ENCODE measurements at regions of chr1 and their contacts with region 1.

Region 1: DNA sequence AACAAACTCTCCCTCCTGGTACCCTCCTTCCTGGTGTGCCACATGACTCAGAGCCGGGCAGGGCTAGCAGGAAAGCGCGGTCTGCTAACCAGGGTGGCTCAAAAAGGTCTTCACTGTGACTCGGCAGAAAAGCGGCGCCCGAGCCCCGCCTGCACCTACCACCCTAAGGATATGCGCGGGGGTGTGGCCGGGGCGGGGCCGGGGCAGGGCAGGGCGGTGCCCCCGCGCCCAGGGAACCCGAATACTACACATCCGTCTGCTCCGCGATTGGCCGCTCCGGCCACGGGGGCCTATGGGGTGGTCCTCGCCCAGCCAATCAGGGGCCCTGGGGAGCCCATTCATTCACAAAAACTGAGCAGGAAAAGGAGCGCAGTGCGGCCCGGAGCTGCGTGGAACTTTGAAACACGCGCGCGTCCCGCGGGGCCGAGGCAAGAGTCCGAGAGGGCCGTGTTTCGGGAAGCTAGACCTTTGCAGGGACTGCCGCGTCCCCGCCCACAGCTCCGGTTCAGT is 1.7 kb downstream of the LRP8 start:
- DNase-seq: peak; percentile 99
- ATAC-seq: peak; percentile 93
- H3K4me3 ChIP-seq: peak overlapping the region; percentile 86
- H3K27ac ChIP-seq: peak overlapping the region; percentile 92
- H3K4me1 ChIP-seq: peaks cover 14 to 42% of the 10 kb centered on the region in 2 experiments
- H3K27me3 ChIP-seq: peaks cover 2 to 3% of the 10 kb centered on the region in 2 experiments; a peak in 1 of 5 replicates
- CTCF ChIP-seq: no peak
- EP300 ChIP-seq: peak; percentile 65; the same call in 1 of the 2 replicates
- POLR2A ChIP-seq: peak; percentile 98
- RAD21 ChIP-seq: no peak

Region 2: GRCh38 chr1:53203466-53203865 is 122.7 kb before region 1 on chr1:
- CTCF ChIA-PET with region 1: no interaction called
- POLR2A ChIA-PET with region 1: no interaction called
- in situ Hi-C with region 1: no loop called
- intact Hi-C with region 1: no loop called
- DNase-seq: no peak
- ATAC-seq: no peak
- H3K4me3 ChIP-seq: no peak overlapping the region
- H3K27ac ChIP-seq: no peak overlapping the region
- H3K4me1 ChIP-seq: no peaks in the 10 kb centered on the region; a peak in 2 of 5 replicates
- H3K27me3 ChIP-seq: no peaks in the 10 kb centered on the region
- CTCF ChIP-seq: no peak
- EP300 ChIP-seq: no peak
- POLR2A ChIP-seq: no peak
- RAD21 ChIP-seq: no peak

Region 3: DNA sequence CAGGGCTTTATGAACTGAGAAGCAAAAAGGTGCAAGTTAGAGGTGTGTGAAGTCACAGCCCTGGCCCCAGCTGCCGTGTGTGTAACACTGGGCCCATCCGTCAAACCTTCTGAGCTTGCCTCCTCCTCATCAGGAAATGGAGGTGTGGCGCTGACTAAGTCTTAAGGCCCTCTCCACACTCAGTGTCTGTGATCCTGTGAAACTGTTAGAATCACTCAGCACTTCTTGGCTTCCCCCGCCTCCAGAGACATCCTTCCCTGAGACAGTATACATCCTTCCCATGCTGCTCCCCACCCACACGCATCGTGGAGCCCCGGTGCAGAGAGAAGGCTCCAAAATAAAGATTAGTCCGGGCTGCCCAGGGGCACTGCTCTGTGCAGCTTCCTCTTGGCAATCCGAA is 31.6 kb before region 1 on chr1:
- CTCF ChIA-PET with region 1: no interaction called
- POLR2A ChIA-PET with region 1: interaction called, 5 read pairs
- in situ Hi-C with region 1: no loop called
- intact Hi-C with region 1: loop called (anchors 5 kb)
- DNase-seq: peak in 1 of 4 experiments; percentile 42
- ATAC-seq: peak; percentile 13
- H3K4me3 ChIP-seq: no peak overlapping the region
- H3K27ac ChIP-seq: no peak overlapping the region
- H3K4me1 ChIP-seq: peaks cover 7 to 35% of the 10 kb centered on the region in 2 experiments; a peak in 3 of 5 replicates
- H3K27me3 ChIP-seq: no peaks in the 10 kb centered on the region
- CTCF ChIP-seq: no peak
- EP300 ChIP-seq: no peak
- POLR2A ChIP-seq: no peak
- RAD21 ChIP-seq: no peak

Region 4: GRCh38 chr1:53315456-53316423 is 10.4 kb before region 1 on chr1:
- CTCF ChIA-PET with region 1: no interaction called
- POLR2A ChIA-PET with region 1: interaction called, 18 read pairs
- in situ Hi-C with region 1: no loop called
- intact Hi-C with region 1: no loop called
- DNase-seq: peak in 2 of 4 experiments; percentile 29 to 38
- ATAC-seq: peak; percentile 70
- H3K4me3 ChIP-seq: no peak overlapping the region
- H3K27ac ChIP-seq: no peak overlapping the region; the same call in 2 of the 3 replicates
- H3K4me1 ChIP-seq: peaks cover 0 to 30% of the 10 kb centered on the region in 2 experiments; a peak in 4 of 5 replicates
- H3K27me3 ChIP-seq: no peaks in the 10 kb centered on the region
- CTCF ChIP-seq: no peak
- EP300 ChIP-seq: no peak
- POLR2A ChIP-seq: no peak
- RAD21 ChIP-seq: no peak

Region 5: GRCh38 chr1:53367503-53368304 is 41.6 kb after region 1 on chr1:
- CTCF ChIA-PET with region 1: no interaction called
- POLR2A ChIA-PET with region 1: interaction called, 5 read pairs
- in situ Hi-C with region 1: no loop called
- intact Hi-C with region 1: loop called (anchors 2 kb)
- DNase-seq: peak; percentile 43 to 80 (median 67)
- ATAC-seq: peak; percentile 78
- H3K4me3 ChIP-seq: no peak overlapping the region
- H3K27ac ChIP-seq: no peak overlapping the region
- H3K4me1 ChIP-seq: peaks cover 20 to 34% of the 10 kb centered on the region in 2 experiments
- H3K27me3 ChIP-seq: peaks cover 7 to 29% of the 10 kb centered on the region in 2 experiments; a peak in 4 of 5 replicates
- CTCF ChIP-seq: no peak
- EP300 ChIP-seq: peak; percentile 55
- POLR2A ChIP-seq: no peak
- RAD21 ChIP-seq: no peak

Measured in K562 (cell line).